AG04449 (cell line): ENCODE measurements at regions of chr12 and their contacts with region 1.

Region 1: GRCh38 chr12:87344699-87345098 is 684.5 kb downstream of the C12orf50 start:
- DNase-seq: no peak
- H3K4me3 ChIP-seq: no peak overlapping the region
- CTCF ChIP-seq: no peak

Region 2: DNA sequence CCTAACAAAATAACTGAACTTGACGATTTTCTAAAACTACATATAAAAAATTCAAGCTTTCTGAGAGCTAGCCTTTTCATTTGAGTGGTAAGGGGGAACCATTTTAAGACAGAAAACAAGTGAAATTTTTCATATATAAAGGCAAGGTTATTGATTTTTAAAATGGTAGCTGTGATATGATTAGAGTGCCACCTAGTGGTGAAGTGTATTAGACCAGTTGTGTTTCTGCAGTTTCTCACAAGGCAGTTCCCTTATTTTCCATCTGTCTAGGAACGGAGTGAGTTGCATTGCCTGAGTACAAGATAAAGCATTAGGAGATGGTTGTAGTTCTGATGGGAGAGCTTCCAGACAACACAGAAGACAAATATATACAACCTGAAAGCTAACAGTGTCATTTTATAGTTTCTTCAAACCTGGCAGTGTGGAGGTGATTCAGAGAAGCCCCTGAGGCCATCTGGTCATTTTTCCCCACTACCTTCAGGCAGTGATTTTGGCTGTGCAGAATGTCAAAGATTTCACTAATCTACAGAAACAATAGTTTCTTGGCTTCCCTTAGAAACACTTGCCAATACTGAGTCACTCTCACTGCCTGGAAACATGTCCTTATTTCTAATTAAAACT is 503.7 kb after region 1 on chr12:
- CTCF ChIA-PET with region 1: interaction called, 11 read pairs
- POLR2A ChIA-PET with region 1: no interaction called
- DNase-seq: peak; percentile 29
- H3K4me3 ChIP-seq: no peak overlapping the region
- CTCF ChIP-seq: peak; percentile 49